ENCODE measurements at regions of chr10 and their contacts with region 1.

Region 1: DNA sequence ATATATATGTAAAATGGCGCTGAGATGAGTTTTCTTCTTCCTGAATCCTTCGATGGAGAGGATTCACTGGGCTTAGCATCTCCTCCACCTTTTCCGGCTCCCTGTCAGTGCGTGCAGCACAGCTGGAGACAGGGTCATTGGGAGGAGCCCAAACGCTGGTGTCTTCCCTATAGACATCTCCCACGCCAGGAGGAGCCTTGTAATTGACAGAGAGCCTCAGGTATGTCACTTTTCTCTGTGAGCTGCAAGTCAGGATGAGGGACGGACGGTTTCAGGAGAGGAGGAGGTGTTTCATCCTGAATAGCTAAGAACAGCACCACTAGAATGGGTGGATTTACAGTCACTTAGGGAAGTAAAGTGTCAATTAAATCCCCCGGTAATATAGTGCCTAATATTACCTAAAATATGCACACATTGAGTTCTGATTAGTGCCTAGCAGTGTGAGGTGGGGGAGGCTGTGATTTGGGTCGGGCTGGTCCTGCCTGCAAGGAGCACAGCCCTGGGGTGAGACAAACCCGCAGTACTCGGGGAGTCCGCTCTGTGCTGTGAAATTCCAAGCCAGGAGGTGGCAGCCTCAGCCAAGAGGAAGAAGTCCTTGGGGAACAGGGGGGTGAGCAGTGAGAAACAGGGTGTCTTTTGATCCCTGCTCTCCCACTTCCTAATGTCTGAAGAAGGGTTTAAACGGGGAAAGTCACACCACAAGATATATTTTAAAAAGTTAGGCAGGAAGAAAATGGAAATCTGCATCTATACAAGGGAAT is 28.2 kb downstream of the IL15RA start:
- DNase-seq: peak; percentile 72
- H3K4me3 Mint-ChIP-seq: peak overlapping the region; percentile 45
- H3K27ac Mint-ChIP-seq: peak overlapping the region; percentile 91
- H3K4me1 Mint-ChIP-seq: peaks cover 60% of the 10 kb centered on the region
- H3K27me3 Mint-ChIP-seq: no peaks in the 10 kb centered on the region
- CTCF ChIP-seq: peak; percentile 44

Region 2: DNA sequence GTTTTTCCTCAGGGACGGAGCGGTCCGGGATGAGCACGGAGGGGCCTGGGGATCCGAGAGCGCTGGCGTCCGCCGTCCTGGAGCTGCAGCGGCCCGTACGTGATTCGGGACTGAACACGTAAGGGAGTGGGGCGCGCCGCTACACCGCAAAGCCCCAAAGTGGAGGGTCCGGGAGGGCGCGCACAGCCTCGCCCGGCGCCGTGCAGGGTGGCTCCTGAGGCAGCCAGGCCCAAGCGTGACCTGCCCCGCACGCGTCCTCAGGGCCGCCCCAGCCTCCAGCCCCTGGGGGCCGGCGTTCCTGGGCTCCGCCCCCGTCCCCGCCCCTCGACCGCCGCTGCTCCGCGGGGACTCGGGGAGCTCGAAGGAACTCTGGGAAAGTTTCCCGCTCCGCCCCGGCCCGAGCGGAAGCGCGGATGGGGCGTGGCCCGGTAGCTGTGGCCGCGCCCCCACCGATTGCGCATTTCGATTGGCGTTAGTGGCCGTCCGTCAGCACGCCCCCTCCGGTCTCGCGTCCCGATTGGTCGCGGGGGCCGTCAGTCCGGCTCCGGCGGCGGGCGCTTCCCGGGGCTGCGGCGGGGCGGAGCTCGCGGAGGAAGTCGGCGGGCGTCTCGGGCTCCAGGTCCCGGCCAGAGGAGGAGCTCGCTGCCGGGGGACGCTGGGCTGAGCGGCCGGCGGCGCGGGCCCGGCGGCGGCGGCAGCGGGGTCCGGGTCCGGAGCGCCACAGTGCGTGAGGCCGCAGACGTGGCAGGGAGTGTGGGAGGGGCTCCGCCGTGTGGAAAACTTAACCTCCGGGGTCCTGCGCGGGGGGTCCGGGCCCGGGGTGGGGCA is 59.3 kb before region 1 on chr10 and contains the starts of genes ANKRD16 and FBH1:
- CTCF ChIA-PET with region 1: interaction called, 3 read pairs
- POLR2A ChIA-PET with region 1: interaction called, 33 read pairs
- intact Hi-C with region 1: no loop called
- DNase-seq: peak; percentile 98
- H3K4me3 Mint-ChIP-seq: peak within 1 kb of the TSS; percentile 80
- H3K27ac Mint-ChIP-seq: peak within 1 kb of the TSS; percentile 49
- H3K4me1 Mint-ChIP-seq: peaks cover 35% of the 10 kb centered on the region
- H3K27me3 Mint-ChIP-seq: no peaks in the 10 kb centered on the region
- CTCF ChIP-seq: no peak
- total RNA-seq, gene ANKRD16: 9.9 and 10.6 TPM in 2 replicates
- total RNA-seq, gene FBH1: 61.8 and 70.5 TPM in 2 replicates

Region 3: DNA sequence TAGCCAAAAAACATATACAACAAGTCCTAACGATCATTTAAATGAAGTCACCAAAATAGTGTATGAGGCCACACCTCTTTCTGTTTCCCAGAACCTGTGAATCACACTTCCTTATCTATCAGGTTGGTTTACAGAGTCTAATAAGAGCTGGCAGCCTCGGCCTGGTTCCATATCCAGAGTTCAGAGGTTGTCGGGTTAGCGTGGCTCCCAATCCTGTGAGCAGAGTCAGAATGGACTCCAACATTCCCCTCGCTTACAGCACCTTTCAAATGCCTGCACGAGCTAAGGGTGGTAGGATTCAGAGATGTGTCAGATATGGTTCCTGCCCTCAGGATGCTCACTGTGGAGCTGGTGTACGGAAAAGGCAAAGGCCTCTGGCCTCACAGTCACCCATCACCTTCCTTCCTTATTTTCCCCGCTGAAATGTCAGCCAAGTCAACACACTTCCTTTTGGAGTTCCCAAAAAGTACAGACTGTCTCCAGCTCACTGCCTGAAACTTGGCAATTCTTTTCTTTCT is 22.2 kb after region 1 on chr10:
- CTCF ChIA-PET with region 1: interaction called, 20 read pairs
- POLR2A ChIA-PET with region 1: interaction called, 64 read pairs
- intact Hi-C with region 1: loop called (anchors 2 kb)
- DNase-seq: peak; percentile 65
- H3K4me3 Mint-ChIP-seq: no peak overlapping the region
- H3K27ac Mint-ChIP-seq: peak overlapping the region; percentile 80
- H3K4me1 Mint-ChIP-seq: peaks cover 10% of the 10 kb centered on the region
- H3K27me3 Mint-ChIP-seq: no peaks in the 10 kb centered on the region
- CTCF ChIP-seq: no peak

Region 4: GRCh38 chr10:5977471-5978229 is 28.5 kb after region 1 on chr10 and contains the start of gene IL15RA:
- CTCF ChIA-PET with region 1: interaction called, 20 read pairs
- POLR2A ChIA-PET with region 1: interaction called, 64 read pairs
- intact Hi-C with region 1: loop called (anchors 2 kb)
- DNase-seq: peak; percentile 80
- H3K4me3 Mint-ChIP-seq: peak within 1 kb of the TSS; percentile 73
- H3K27ac Mint-ChIP-seq: peak within 1 kb of the TSS; percentile 70
- H3K4me1 Mint-ChIP-seq: no peaks in the 10 kb centered on the region
- H3K27me3 Mint-ChIP-seq: no peaks in the 10 kb centered on the region
- CTCF ChIP-seq: no peak
- total RNA-seq, gene IL15RA: 6.0 and 7.9 TPM in 2 replicates

Region 5: DNA sequence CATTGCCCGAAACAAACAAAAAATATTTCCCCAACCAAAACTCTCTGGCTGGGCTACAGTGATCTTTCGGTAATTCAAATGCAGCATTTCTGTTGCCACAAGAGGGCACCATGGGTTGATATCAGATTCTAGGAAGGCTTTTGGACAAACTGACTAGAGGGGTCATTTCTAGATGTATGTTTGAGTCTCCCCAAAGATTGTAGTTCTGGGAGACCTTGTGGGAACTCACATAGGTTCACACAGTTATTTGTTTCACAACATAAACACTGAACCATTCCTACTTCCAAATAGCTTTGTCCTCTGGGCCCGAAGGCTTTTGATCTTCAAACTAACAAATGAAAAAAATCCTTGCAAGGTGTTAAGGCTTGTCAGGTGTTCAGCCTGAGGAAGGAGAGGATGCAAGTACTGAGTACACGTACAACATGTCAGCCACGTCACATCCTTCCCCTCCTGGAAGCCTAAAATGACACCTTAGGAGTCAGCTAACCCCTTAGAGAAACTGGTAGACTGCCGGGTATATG is 65.1 kb after region 1 on chr10:
- CTCF ChIA-PET with region 1: interaction called, 20 read pairs
- POLR2A ChIA-PET with region 1: interaction called, 3 read pairs
- intact Hi-C with region 1: no loop called
- DNase-seq: peak; percentile 64
- H3K4me3 Mint-ChIP-seq: no peak overlapping the region
- H3K27ac Mint-ChIP-seq: no peak overlapping the region
- H3K4me1 Mint-ChIP-seq: no peaks in the 10 kb centered on the region
- H3K27me3 Mint-ChIP-seq: peaks cover 11% of the 10 kb centered on the region
- CTCF ChIP-seq: peak; percentile 58

Region 6: DNA sequence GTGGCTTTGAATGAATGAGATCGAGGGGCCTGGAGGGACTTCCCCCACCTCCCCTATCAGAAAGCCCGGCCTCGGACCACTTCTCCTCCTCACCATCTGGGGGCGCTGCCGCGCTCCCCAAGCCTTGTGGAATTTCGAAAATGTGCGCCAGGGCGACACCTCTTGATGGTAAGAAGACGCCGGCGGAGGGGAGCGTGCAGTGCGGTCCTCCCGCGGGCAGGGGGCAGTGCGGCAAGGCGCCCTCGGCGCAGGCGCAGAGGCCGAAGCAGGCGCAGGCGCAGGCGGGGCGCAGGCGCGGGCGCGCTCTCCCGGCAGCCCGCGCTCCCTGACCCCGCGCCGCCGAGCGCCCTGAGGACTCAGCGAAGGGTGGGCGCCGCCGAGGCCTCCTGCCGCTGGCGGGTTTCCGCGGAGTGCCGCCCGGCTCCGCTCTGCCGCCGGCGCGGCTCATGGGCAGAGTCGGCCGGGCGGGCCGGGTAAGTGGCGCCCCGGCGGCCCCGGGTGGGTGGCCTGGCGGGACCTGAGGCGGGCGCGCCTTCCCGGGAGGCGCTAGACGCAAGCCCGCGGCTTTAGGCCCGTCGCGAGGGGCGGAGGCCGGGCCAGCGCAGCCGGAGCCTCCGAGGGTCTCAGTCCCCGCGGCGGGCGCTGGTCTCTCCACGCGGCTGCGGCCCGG is 139.7 kb after region 1 on chr10 and contains the start of gene RBM17:
- CTCF ChIA-PET with region 1: interaction called, 5 read pairs
- POLR2A ChIA-PET with region 1: interaction called, 6 read pairs
- intact Hi-C with region 1: loop called (anchors 2 kb)
- DNase-seq: peak; percentile 94
- H3K4me3 Mint-ChIP-seq: peak within 1 kb of the TSS; percentile 79
- H3K27ac Mint-ChIP-seq: peak within 1 kb of the TSS; percentile 52
- H3K4me1 Mint-ChIP-seq: peaks cover 32% of the 10 kb centered on the region
- H3K27me3 Mint-ChIP-seq: peaks cover 28% of the 10 kb centered on the region
- CTCF ChIP-seq: peak; percentile 100
- total RNA-seq, gene RBM17: 113 and 128 TPM in 2 replicates

Region 7: GRCh38 chr10:6171881-6172695 is 222.9 kb after region 1 on chr10:
- CTCF ChIA-PET with region 1: no interaction called
- POLR2A ChIA-PET with region 1: no interaction called
- intact Hi-C with region 1: no loop called
- DNase-seq: no peak
- H3K4me3 Mint-ChIP-seq: no peak overlapping the region
- H3K27ac Mint-ChIP-seq: no peak overlapping the region
- H3K4me1 Mint-ChIP-seq: peaks cover 27% of the 10 kb centered on the region
- H3K27me3 Mint-ChIP-seq: no peaks in the 10 kb centered on the region
- CTCF ChIP-seq: no peak

Region 8: GRCh38 chr10:6328699-6329423 is 379.7 kb after region 1 on chr10:
- CTCF ChIA-PET with region 1: no interaction called
- POLR2A ChIA-PET with region 1: no interaction called
- intact Hi-C with region 1: no loop called
- DNase-seq: no peak
- H3K4me3 Mint-ChIP-seq: no peak overlapping the region
- H3K27ac Mint-ChIP-seq: no peak overlapping the region
- H3K4me1 Mint-ChIP-seq: no peaks in the 10 kb centered on the region
- H3K27me3 Mint-ChIP-seq: no peaks in the 10 kb centered on the region
- CTCF ChIP-seq: no peak

Region 9: GRCh38 chr10:6396652-6397051 is 447.5 kb after region 1 on chr10:
- CTCF ChIA-PET with region 1: interaction called, 4 read pairs
- POLR2A ChIA-PET with region 1: interaction called, 3 read pairs
- intact Hi-C with region 1: loop called (anchors 2 kb)
- DNase-seq: peak; percentile 92
- H3K4me3 Mint-ChIP-seq: no peak overlapping the region
- H3K27ac Mint-ChIP-seq: peak overlapping the region; percentile 1
- H3K4me1 Mint-ChIP-seq: peaks cover 26% of the 10 kb centered on the region
- H3K27me3 Mint-ChIP-seq: no peaks in the 10 kb centered on the region
- CTCF ChIP-seq: no peak

Measured in MCF 10A (cell line).